PC-3 (cell line): ENCODE measurements at regions of chr13 and their contacts with region 1.

Region 1: DNA sequence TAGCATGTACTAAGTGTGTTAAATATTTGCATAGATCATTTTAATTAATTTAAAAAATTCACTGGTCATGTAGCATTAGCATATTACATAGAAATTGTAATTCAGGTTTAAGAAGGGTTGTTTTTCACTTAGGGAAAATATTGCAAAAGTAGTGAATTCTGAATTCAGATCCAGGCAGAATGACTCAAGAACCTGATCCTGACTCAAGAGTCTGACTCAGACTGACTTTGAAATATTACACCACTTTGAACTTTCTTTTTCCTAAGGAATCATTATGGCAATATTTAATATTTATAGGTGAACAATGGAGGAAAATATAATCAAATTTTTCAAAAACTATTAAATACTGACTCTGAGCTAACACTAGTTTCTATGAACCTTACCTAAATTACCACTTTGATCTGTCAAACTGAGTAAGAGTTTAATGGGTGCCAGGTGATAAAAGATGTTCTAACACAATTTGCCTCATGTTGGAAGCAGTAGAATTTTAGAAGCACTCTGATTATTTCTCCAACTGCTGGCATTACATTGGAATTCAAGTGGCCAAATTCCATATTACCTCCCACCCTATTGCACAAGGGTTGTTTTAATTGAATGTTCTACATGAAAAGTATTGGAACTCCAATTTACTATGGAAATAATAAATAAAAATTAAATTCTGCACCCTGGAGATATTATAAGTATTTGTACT is 261.6 kb downstream of the SLITRK1 start:
- DNase-seq: peak; percentile 71
- ATAC-seq: peak; percentile 47; the same call in 1 of the 2 replicates
- H3K4me3 ChIP-seq: no peak overlapping the region
- H3K27ac ChIP-seq: peak overlapping the region; percentile 63
- H3K4me1 ChIP-seq: peaks cover 22% of the 10 kb centered on the region
- H3K27me3 ChIP-seq: no peaks in the 10 kb centered on the region
- CTCF ChIP-seq: no peak

Region 2: GRCh38 chr13:83221813-83222241 is 398.8 kb before region 1 on chr13:
- CTCF ChIA-PET with region 1: no interaction called
- POLR2A ChIA-PET with region 1: no interaction called
- intact Hi-C with region 1: loop called (anchors 5 kb)
- DNase-seq: peak; percentile 93
- ATAC-seq: peak; percentile 84
- H3K4me3 ChIP-seq: no peak overlapping the region; the same call in 1 of the 2 replicates
- H3K27ac ChIP-seq: peak overlapping the region; percentile 98
- H3K4me1 ChIP-seq: peaks cover 23% of the 10 kb centered on the region
- H3K27me3 ChIP-seq: no peaks in the 10 kb centered on the region
- CTCF ChIP-seq: no peak

Region 3: GRCh38 chr13:83730671-83731070 is 110.0 kb after region 1 on chr13:
- CTCF ChIA-PET with region 1: no interaction called
- POLR2A ChIA-PET with region 1: no interaction called
- intact Hi-C with region 1: no loop called
- DNase-seq: no peak
- ATAC-seq: no peak
- H3K4me3 ChIP-seq: no peak overlapping the region
- H3K27ac ChIP-seq: no peak overlapping the region
- H3K4me1 ChIP-seq: no peaks in the 10 kb centered on the region
- H3K27me3 ChIP-seq: no peaks in the 10 kb centered on the region
- CTCF ChIP-seq: no peak